Mammary epithelial cell (primary cell): ENCODE measurements at regions of chr1 and their contacts with region 1.

Region 1: GRCh38 chr1:62625415-62625814 is 28.1 kb downstream of the ANGPTL3 start:
- DNase-seq: no peak
- H3K4me3 ChIP-seq: no peak overlapping the region
- H3K27ac ChIP-seq: no peak overlapping the region
- H3K4me1 ChIP-seq: peaks cover 15% of the 10 kb centered on the region
- H3K27me3 ChIP-seq: no peaks in the 10 kb centered on the region
- CTCF ChIP-seq: no peak

Region 2: GRCh38 chr1:62672029-62672428 is 46.6 kb after region 1 on chr1:
- CTCF ChIA-PET with region 1: no interaction called
- dilution Hi-C with region 1: no loop called
- in situ Hi-C with region 1: no loop called
- intact Hi-C with region 1: no loop called
- DNase-seq: no peak
- H3K4me3 ChIP-seq: no peak overlapping the region
- H3K27ac ChIP-seq: no peak overlapping the region
- H3K4me1 ChIP-seq: no peaks in the 10 kb centered on the region
- H3K27me3 ChIP-seq: no peaks in the 10 kb centered on the region
- CTCF ChIP-seq: no peak

Region 3: GRCh38 chr1:62682531-62682930 is 57.1 kb after region 1 on chr1:
- CTCF ChIA-PET with region 1: no interaction called
- dilution Hi-C with region 1: loop called (anchors 5 kb)
- in situ Hi-C with region 1: no loop called
- intact Hi-C with region 1: no loop called
- DNase-seq: peak; percentile 23
- H3K4me3 ChIP-seq: no peak overlapping the region
- H3K27ac ChIP-seq: no peak overlapping the region
- H3K4me1 ChIP-seq: peaks cover 26% of the 10 kb centered on the region
- H3K27me3 ChIP-seq: no peaks in the 10 kb centered on the region
- CTCF ChIP-seq: no peak

Region 4: DNA sequence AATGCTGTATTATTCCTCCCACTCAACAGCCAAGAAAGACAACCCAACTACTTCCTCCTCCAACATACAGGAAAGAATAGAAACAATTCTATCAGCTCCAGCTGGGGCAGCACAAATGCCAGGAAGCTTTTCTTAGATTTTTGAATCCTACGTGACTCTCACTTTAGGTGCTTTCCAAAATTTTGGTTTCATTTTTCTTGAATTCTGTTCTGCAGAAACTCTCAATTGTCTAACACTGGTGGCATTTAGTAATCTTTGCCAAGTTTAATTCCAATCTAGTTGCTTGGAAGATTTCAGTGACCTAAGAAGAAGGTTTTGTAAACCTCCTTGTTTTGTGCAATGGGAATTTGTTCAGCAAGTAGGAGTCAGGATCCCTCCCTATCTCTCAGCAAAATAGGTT is 99.8 kb after region 1 on chr1:
- CTCF ChIA-PET with region 1: no interaction called
- dilution Hi-C with region 1: no loop called
- in situ Hi-C with region 1: no loop called
- intact Hi-C with region 1: no loop called
- DNase-seq: peak; percentile 29
- H3K4me3 ChIP-seq: no peak overlapping the region
- H3K27ac ChIP-seq: no peak overlapping the region
- H3K4me1 ChIP-seq: no peaks in the 10 kb centered on the region
- H3K27me3 ChIP-seq: no peaks in the 10 kb centered on the region
- CTCF ChIP-seq: no peak